CD8-positive, alpha-beta T cell (primary cell): ENCODE measurements at regions of chr9 and their contacts with region 1.

Region 1: GRCh38 chr9:125241000-125241862 is at the start of gene HSPA5:
- DNase-seq: peak; percentile 98 to 100 (median 99)
- ATAC-seq: peak; percentile 90
- H3K4me3 ChIP-seq: peak within 1 kb of the TSS; percentile 91 to 93
- H3K4me3 Mint-ChIP-seq: peak within 1 kb of the TSS; percentile 97
- H3K27ac ChIP-seq: peak within 1 kb of the TSS; percentile 97 to 99
- H3K27ac Mint-ChIP-seq: peak within 1 kb of the TSS; percentile 99
- H3K4me1 ChIP-seq: peaks cover 46% of the 10 kb centered on the region
- H3K4me1 Mint-ChIP-seq: peaks cover 46% of the 10 kb centered on the region
- H3K27me3 ChIP-seq: no peaks in the 10 kb centered on the region
- H3K27me3 Mint-ChIP-seq: no peaks in the 10 kb centered on the region
- CTCF ChIP-seq: no peak
- total RNA-seq, gene HSPA5: 354 to 372 TPM

Region 2: GRCh38 chr9:124861342-124862229 is 379.6 kb before region 1 on chr9 and contains the starts of genes ARPC5L and RPL35:
- CTCF ChIA-PET with region 1: no interaction called
- POLR2A ChIA-PET with region 1: interaction called, 8 read pairs
- intact Hi-C with region 1: loop called (anchors 1 to 5 kb)
- DNase-seq: peak; percentile 90 to 97 (median 95)
- ATAC-seq: peak; percentile 95
- H3K4me3 ChIP-seq: peak within 1 kb of the TSS; percentile 67 to 90
- H3K4me3 Mint-ChIP-seq: peak within 1 kb of the TSS; percentile 97
- H3K27ac ChIP-seq: peak within 1 kb of the TSS; percentile 88 to 93
- H3K27ac Mint-ChIP-seq: peak within 1 kb of the TSS; percentile 98
- H3K4me1 ChIP-seq: peaks cover 16% of the 10 kb centered on the region
- H3K4me1 Mint-ChIP-seq: peaks cover 31% of the 10 kb centered on the region
- H3K27me3 ChIP-seq: no peaks in the 10 kb centered on the region
- H3K27me3 Mint-ChIP-seq: no peaks in the 10 kb centered on the region
- CTCF ChIP-seq: no peak
- total RNA-seq, gene ARPC5L: 43.2 to 45.5 TPM
- total RNA-seq, gene RPL35: 1,798 to 1,805 TPM

Region 3: DNA sequence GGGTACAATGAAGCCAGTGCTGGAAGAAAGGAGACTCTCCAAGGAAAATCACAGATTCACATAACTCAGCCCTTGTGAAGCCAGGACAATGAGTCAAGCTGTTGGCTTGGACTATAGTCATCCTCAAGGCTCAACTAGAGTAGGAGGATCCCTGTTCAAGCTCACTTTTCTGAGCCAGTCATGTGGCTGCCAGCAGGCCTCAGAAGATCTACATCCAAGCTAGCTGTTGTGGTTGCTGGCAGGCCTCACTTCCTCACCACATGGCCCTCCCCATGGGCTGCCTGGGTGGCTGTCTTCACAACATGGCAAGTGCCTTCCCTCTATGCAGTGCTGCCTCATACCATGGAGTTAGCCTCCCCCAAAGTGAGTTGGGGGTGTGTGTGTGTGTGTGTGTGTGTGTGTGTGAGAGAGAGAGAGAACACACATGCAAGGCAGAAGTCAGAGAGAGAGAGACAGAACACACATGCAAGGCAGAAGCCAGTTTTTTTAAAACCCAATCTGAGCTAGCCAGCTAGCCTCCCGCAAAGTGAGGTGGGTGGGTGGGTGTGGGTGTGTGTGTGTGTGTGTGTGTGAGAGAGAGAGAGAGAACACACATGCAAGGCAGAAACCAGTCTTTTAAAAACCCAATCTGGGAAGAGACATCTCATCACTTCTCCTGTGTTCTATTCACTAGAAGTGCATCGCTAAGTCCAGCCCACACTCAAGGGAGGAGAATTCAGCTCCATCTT is 115.0 kb before region 1 on chr9:
- CTCF ChIA-PET with region 1: no interaction called
- POLR2A ChIA-PET with region 1: no interaction called
- intact Hi-C with region 1: no loop called
- DNase-seq: peak; percentile 65 to 95 (median 82)
- ATAC-seq: peak; percentile 99
- H3K4me3 ChIP-seq: no peak overlapping the region
- H3K4me3 Mint-ChIP-seq: peak overlapping the region; percentile 61
- H3K27ac ChIP-seq: peak overlapping the region in 1 of 2 experiments; percentile 42
- H3K27ac Mint-ChIP-seq: peak overlapping the region; percentile 91
- H3K4me1 ChIP-seq: peaks cover 23% of the 10 kb centered on the region
- H3K4me1 Mint-ChIP-seq: peaks cover 36% of the 10 kb centered on the region
- H3K27me3 ChIP-seq: no peaks in the 10 kb centered on the region
- H3K27me3 Mint-ChIP-seq: no peaks in the 10 kb centered on the region
- CTCF ChIP-seq: no peak

Region 4: GRCh38 chr9:125200210-125201047 is 40.8 kb before region 1 on chr9 and contains the start of gene RABEPK:
- CTCF ChIA-PET with region 1: no interaction called
- POLR2A ChIA-PET with region 1: interaction called, 25 read pairs
- intact Hi-C with region 1: loop called (anchors 1 kb)
- DNase-seq: peak; percentile 74 to 94 (median 89)
- ATAC-seq: peak; percentile 97
- H3K4me3 ChIP-seq: peak within 1 kb of the TSS; percentile 77 to 100
- H3K4me3 Mint-ChIP-seq: peak within 1 kb of the TSS; percentile 91
- H3K27ac ChIP-seq: peak within 1 kb of the TSS; percentile 85 to 88
- H3K27ac Mint-ChIP-seq: peak within 1 kb of the TSS; percentile 90
- H3K4me1 ChIP-seq: peaks cover 41% of the 10 kb centered on the region
- H3K4me1 Mint-ChIP-seq: peaks cover 51% of the 10 kb centered on the region
- H3K27me3 ChIP-seq: no peaks in the 10 kb centered on the region
- H3K27me3 Mint-ChIP-seq: no peaks in the 10 kb centered on the region
- CTCF ChIP-seq: no peak
- total RNA-seq, gene RABEPK: 6.2 to 6.9 TPM

Region 5: GRCh38 chr9:125296833-125297372 is 55.7 kb after region 1 on chr9:
- CTCF ChIA-PET with region 1: no interaction called
- POLR2A ChIA-PET with region 1: interaction called, 3 read pairs
- intact Hi-C with region 1: loop called in 1 of 2 experiments (anchors 5 kb)
- DNase-seq: no peak
- ATAC-seq: no peak
- H3K4me3 ChIP-seq: no peak overlapping the region
- H3K4me3 Mint-ChIP-seq: no peak overlapping the region
- H3K27ac ChIP-seq: no peak overlapping the region
- H3K27ac Mint-ChIP-seq: peak overlapping the region; percentile 11
- H3K4me1 ChIP-seq: no peaks in the 10 kb centered on the region
- H3K4me1 Mint-ChIP-seq: peaks cover 16% of the 10 kb centered on the region
- H3K27me3 ChIP-seq: no peaks in the 10 kb centered on the region
- H3K27me3 Mint-ChIP-seq: no peaks in the 10 kb centered on the region
- CTCF ChIP-seq: no peak

Region 6: DNA sequence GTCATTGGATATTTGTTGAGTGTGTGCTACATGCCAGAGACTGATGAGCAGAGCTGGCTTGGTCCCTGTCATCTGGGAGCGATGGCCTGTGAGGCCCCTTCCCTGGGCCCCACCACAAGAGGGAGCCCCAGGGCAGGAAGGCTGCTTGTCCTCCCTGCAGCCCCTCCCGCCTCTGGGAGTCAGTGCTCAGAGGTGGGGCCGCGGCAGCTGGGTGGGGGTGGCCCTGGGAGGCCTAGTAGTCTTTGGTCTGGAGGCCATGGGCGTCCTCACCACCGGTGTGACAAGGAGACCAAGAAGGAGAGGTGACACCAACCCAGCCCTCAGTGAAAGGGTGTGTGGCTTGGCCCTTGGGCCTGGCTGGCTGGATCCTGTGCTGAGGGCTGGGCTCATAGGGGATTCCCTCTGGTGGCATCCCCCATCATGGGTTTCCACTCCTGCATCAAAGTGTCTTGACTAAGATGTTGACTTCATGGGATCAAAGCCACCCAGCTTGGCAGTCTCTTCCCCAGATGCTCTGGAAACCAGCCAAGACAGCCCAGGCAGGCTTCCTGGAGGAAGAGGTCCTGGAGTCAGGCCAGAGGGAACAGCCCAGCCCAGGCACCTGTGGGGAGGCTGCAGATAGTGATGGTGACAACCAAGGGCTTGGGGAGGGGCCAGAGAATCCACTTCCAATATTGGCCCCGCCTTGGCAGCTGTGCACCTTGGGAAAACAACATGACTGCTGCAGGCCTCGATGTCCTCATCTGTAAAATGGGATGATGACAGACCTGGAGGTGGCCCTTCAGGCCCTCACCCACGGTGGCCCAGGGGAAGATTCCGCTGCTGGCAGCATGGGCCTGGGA is 187.1 kb after region 1 on chr9:
- CTCF ChIA-PET with region 1: no interaction called
- POLR2A ChIA-PET with region 1: no interaction called
- intact Hi-C with region 1: no loop called
- DNase-seq: peak in 1 of 9 experiments; percentile 13
- ATAC-seq: no peak
- H3K4me3 ChIP-seq: no peak overlapping the region
- H3K4me3 Mint-ChIP-seq: no peak overlapping the region
- H3K27ac ChIP-seq: no peak overlapping the region
- H3K27ac Mint-ChIP-seq: no peak overlapping the region
- H3K4me1 ChIP-seq: no peaks in the 10 kb centered on the region
- H3K4me1 Mint-ChIP-seq: no peaks in the 10 kb centered on the region
- H3K27me3 ChIP-seq: no peaks in the 10 kb centered on the region
- H3K27me3 Mint-ChIP-seq: no peaks in the 10 kb centered on the region
- CTCF ChIP-seq: no peak

Region 7: GRCh38 chr9:126722252-126723078 is 1481.2 kb after region 1 on chr9:
- CTCF ChIA-PET with region 1: no interaction called
- POLR2A ChIA-PET with region 1: no interaction called
- intact Hi-C with region 1: loop called in 1 of 2 experiments (anchors 5 kb)
- DNase-seq: peak; percentile 66 to 94 (median 90)
- ATAC-seq: peak; percentile 66
- H3K4me3 ChIP-seq: peak overlapping the region; percentile 65 to 92
- H3K4me3 Mint-ChIP-seq: peak overlapping the region; percentile 90
- H3K27ac ChIP-seq: peak overlapping the region; percentile 87 to 99
- H3K27ac Mint-ChIP-seq: peak overlapping the region; percentile 95
- H3K4me1 ChIP-seq: peaks cover 44% of the 10 kb centered on the region
- H3K4me1 Mint-ChIP-seq: peaks cover 53% of the 10 kb centered on the region
- H3K27me3 ChIP-seq: no peaks in the 10 kb centered on the region
- H3K27me3 Mint-ChIP-seq: no peaks in the 10 kb centered on the region
- CTCF ChIP-seq: no peak